Mammary epithelial cell (primary cell): ENCODE measurements at regions of chr1 and their contacts with region 1.

Region 1: DNA sequence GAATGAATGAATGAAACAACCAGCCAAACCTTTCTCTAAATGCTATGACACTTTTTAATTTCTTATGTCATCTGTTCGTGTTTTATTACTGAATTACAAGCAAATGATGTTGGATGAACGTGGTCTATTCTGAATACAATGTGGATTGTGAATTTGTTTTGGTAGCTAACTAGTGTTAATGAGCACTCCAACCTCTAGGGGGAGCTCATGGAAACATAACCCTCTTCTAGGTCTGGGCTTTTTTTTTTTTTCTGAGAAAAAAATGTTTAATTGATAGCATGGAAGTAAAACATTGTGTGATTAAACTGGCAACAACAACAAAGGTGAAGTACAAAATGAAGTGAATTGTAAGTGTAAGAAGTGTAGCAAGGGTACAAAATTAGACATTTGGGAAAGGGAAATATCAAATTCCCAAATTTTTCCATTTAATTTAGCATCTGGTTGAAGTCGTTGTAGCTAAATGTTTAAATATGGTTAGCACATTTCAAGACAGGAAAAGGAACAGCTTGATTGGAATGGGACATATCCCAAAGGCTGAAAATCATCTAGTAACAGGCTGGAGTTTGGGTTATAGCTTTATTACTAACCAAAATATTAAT is 42.6 kb upstream of the PTGS2 start:
- DNase-seq: peak; percentile 21
- H3K4me3 ChIP-seq: no peak overlapping the region
- H3K27ac ChIP-seq: no peak overlapping the region
- H3K4me1 ChIP-seq: no peaks in the 10 kb centered on the region
- H3K27me3 ChIP-seq: no peaks in the 10 kb centered on the region
- CTCF ChIP-seq: peak; percentile 75 to 86

Region 2: GRCh38 chr1:186605762-186606350 is 117.0 kb before region 1 on chr1:
- CTCF ChIA-PET with region 1: no interaction called
- dilution Hi-C with region 1: no loop called
- in situ Hi-C with region 1: no loop called
- intact Hi-C with region 1: no loop called
- DNase-seq: peak; percentile 64
- H3K4me3 ChIP-seq: no peak overlapping the region
- H3K27ac ChIP-seq: no peak overlapping the region
- H3K4me1 ChIP-seq: no peaks in the 10 kb centered on the region
- H3K27me3 ChIP-seq: no peaks in the 10 kb centered on the region
- CTCF ChIP-seq: peak; percentile 91 to 94

Region 3: DNA sequence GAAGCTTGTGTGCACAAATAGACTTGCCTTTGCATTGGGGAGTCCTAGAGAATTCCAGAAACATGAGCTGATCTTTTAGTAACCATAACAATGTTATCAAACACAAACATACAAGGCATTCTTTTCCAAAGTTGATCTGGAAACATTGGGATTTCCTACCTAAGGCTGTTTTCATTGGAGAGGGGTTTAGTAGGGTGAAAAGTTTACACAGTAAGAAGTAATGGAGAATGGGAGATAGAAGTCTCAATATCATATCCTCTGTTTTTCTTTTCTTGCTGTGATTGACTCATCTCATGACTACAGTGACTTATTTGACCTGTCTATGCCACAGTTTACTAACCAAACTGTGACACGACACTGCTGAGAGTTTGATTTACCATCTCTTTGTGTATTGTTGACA is 40.3 kb after region 1 on chr1:
- CTCF ChIA-PET with region 1: no interaction called
- dilution Hi-C with region 1: no loop called
- in situ Hi-C with region 1: no loop called
- intact Hi-C with region 1: loop called (anchors 1 kb)
- DNase-seq: peak; percentile 54
- H3K4me3 ChIP-seq: no peak overlapping the region
- H3K27ac ChIP-seq: no peak overlapping the region
- H3K4me1 ChIP-seq: no peaks in the 10 kb centered on the region
- H3K27me3 ChIP-seq: no peaks in the 10 kb centered on the region
- CTCF ChIP-seq: no peak

Region 4: GRCh38 chr1:186806477-186806876 is 83.7 kb after region 1 on chr1:
- CTCF ChIA-PET with region 1: no interaction called
- dilution Hi-C with region 1: no loop called
- in situ Hi-C with region 1: no loop called
- intact Hi-C with region 1: loop called (anchors 1 kb)
- DNase-seq: peak; percentile 27
- H3K4me3 ChIP-seq: no peak overlapping the region
- H3K27ac ChIP-seq: no peak overlapping the region
- H3K4me1 ChIP-seq: no peaks in the 10 kb centered on the region
- H3K27me3 ChIP-seq: no peaks in the 10 kb centered on the region
- CTCF ChIP-seq: peak; percentile 35 to 59

Region 5: DNA sequence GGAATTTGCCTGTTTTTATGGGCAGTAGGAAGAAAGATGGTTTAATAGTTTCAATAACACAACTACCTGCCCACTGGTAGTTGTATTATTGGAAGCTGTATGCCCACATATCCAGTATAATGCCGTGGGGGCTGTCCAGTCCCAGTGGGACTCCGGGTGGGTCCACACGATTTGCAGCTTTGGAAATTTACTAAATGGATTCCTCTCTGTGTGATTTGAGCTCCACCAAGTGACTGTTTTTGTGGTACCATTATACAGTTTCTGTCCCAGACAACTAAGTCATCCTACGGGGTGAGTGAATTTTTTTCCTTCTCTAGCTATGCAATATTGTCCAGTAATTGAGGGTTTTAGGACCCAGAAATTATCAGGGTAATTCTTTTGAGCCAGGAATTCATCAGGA is 192.7 kb after region 1 on chr1:
- CTCF ChIA-PET with region 1: no interaction called
- dilution Hi-C with region 1: no loop called
- in situ Hi-C with region 1: no loop called
- intact Hi-C with region 1: loop called (anchors 1 kb)
- DNase-seq: no peak
- H3K4me3 ChIP-seq: no peak overlapping the region
- H3K27ac ChIP-seq: no peak overlapping the region
- H3K4me1 ChIP-seq: no peaks in the 10 kb centered on the region
- H3K27me3 ChIP-seq: no peaks in the 10 kb centered on the region
- CTCF ChIP-seq: peak in 1 of 2 donors; percentile 30

Region 6: GRCh38 chr1:187306710-187307415 is 584.1 kb after region 1 on chr1:
- CTCF ChIA-PET with region 1: no interaction called
- dilution Hi-C with region 1: no loop called
- in situ Hi-C with region 1: no loop called
- intact Hi-C with region 1: no loop called
- DNase-seq: no peak
- H3K4me3 ChIP-seq: no peak overlapping the region
- H3K27ac ChIP-seq: no peak overlapping the region
- H3K4me1 ChIP-seq: no peaks in the 10 kb centered on the region
- H3K27me3 ChIP-seq: no peaks in the 10 kb centered on the region
- CTCF ChIP-seq: no peak